HepG2 (cell line): ENCODE measurements at regions of chr15 and their contacts with region 1.

Region 1: DNA sequence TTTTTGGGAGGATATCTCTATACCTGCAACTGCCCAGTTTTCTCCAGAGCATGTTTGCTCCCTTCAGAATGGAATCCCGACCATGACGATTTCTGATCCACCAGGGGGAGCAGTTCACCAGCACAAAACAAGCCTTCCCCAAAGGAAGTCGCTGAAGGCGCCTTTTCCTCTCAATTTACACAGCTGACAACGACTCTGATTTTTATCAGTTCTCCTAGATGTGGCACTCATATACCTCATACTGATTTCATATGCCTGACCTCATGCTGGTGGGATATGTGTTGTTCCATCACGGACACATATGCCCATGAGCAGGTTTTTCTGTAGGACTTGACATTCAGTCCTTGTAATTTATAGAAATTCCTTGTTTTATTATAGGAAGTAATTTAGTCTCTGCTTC is 1028.2 kb downstream of the MCTP2 start:
- DNase-seq: peak; percentile 35
- ATAC-seq: peak; percentile 82
- H3K4me3 ChIP-seq: no peak overlapping the region
- H3K27ac ChIP-seq: no peak overlapping the region
- H3K4me1 ChIP-seq: no peaks in the 10 kb centered on the region
- H3K27me3 ChIP-seq: no peaks in the 10 kb centered on the region; a peak in 1 of 5 replicates
- CTCF ChIP-seq: peak; percentile 78
- EP300 ChIP-seq: no peak
- POLR2A ChIP-seq: no peak
- RAD21 ChIP-seq: 0 out of 2 replicates have a peak, but pooled peaks have one; percentile 21

Region 2: GRCh38 chr15:95784508-95784907 is 525.0 kb after region 1 on chr15:
- CTCF ChIA-PET with region 1: no interaction called
- POLR2A ChIA-PET with region 1: no interaction called
- in situ Hi-C with region 1: no loop called
- intact Hi-C with region 1: no loop called
- DNase-seq: no peak
- ATAC-seq: no peak
- H3K4me3 ChIP-seq: no peak overlapping the region
- H3K27ac ChIP-seq: no peak overlapping the region
- H3K4me1 ChIP-seq: no peaks in the 10 kb centered on the region
- H3K27me3 ChIP-seq: no peaks in the 10 kb centered on the region
- CTCF ChIP-seq: no peak
- EP300 ChIP-seq: no peak
- POLR2A ChIP-seq: no peak
- RAD21 ChIP-seq: no peak

Region 3: GRCh38 chr15:96585484-96586386 is 1326.2 kb after region 1 on chr15:
- CTCF ChIA-PET with region 1: no interaction called
- POLR2A ChIA-PET with region 1: no interaction called
- in situ Hi-C with region 1: no loop called
- intact Hi-C with region 1: loop called (anchors 2 kb)
- DNase-seq: no peak
- ATAC-seq: no peak
- H3K4me3 ChIP-seq: no peak overlapping the region
- H3K27ac ChIP-seq: no peak overlapping the region
- H3K4me1 ChIP-seq: no peaks in the 10 kb centered on the region
- H3K27me3 ChIP-seq: no peaks in the 10 kb centered on the region; a peak in 1 of 5 replicates
- CTCF ChIP-seq: no peak
- EP300 ChIP-seq: no peak
- POLR2A ChIP-seq: no peak
- RAD21 ChIP-seq: no peak

Region 4: GRCh38 chr15:97248376-97248775 is 1988.9 kb after region 1 on chr15:
- CTCF ChIA-PET with region 1: interaction called, 14 read pairs
- POLR2A ChIA-PET with region 1: no interaction called
- in situ Hi-C with region 1: no loop called
- intact Hi-C with region 1: loop called (anchors 1 kb)
- DNase-seq: no peak
- ATAC-seq: no peak
- H3K4me3 ChIP-seq: no peak overlapping the region
- H3K27ac ChIP-seq: no peak overlapping the region
- H3K4me1 ChIP-seq: no peaks in the 10 kb centered on the region
- H3K27me3 ChIP-seq: no peaks in the 10 kb centered on the region; a peak in 1 of 5 replicates
- CTCF ChIP-seq: no peak
- EP300 ChIP-seq: no peak
- POLR2A ChIP-seq: no peak
- RAD21 ChIP-seq: no peak